CD4-positive, alpha-beta T cell (primary cell): ENCODE measurements at regions of chr10 and their contacts with region 1.

Region 1: DNA sequence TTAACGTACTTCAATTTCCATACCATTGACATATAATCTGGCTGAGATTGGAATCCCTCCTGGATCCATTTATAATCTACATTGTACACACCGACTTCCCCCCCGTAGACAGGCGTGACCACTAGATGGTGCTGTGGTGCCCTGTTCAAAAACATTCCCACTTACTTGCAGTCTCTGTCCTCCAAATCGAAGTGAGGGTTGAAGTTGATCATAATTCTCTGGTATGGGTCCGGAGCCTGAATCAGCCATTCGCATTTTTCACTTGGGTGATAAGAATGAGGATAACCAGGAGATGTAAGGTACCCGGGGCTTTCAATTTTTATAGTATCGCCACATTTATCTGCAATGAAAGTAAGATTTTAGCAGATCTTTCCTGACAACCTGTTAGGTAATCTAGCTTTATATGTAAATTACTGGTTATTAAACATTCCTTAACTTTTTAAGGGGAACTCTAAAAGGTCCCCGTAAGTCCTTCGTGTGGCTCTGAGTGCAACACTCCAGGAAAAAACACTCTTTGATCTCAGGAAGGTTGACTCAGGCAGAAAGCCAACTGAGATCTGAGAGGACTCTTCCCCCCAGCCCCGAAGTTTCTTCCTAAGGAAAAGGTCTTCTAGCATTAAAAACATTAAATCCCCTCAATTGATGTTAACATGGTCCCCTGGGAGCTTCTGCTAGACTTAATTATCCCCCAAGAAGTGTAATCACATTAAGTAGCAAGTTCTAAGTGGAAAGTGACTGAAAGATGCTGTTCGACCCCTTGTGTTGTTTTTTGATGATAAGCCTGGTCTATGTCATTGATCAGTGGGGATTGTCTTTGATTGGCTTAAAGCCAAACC is 3.7 kb downstream of the NRP1 start:
- DNase-seq: peak; percentile 55 to 88 (median 70)
- ATAC-seq: peak; percentile 65
- H3K4me3 ChIP-seq: no peak overlapping the region
- H3K4me3 Mint-ChIP-seq: no peak overlapping the region
- H3K27ac ChIP-seq: no peak overlapping the region
- H3K27ac Mint-ChIP-seq: no peak overlapping the region
- H3K4me1 ChIP-seq: peaks cover 26% of the 10 kb centered on the region
- H3K4me1 Mint-ChIP-seq: peaks cover 15% of the 10 kb centered on the region
- H3K27me3 ChIP-seq: peaks cover 34 to 44% of the 10 kb centered on the region in 2 experiments
- H3K27me3 Mint-ChIP-seq: peaks cover 73% of the 10 kb centered on the region
- CTCF ChIP-seq: peak; percentile 92

Region 2: GRCh38 chr10:32795598-32796183 is 535.1 kb before region 1 on chr10:
- CTCF ChIA-PET with region 1: no interaction called
- POLR2A ChIA-PET with region 1: no interaction called
- intact Hi-C with region 1: loop called in 1 of 2 experiments (anchors 5 kb)
- DNase-seq: peak in 4 of 14 experiments; percentile 23 to 66 (median 58)
- ATAC-seq: peak; percentile 46
- H3K4me3 ChIP-seq: no peak overlapping the region
- H3K4me3 Mint-ChIP-seq: no peak overlapping the region
- H3K27ac ChIP-seq: no peak overlapping the region
- H3K27ac Mint-ChIP-seq: no peak overlapping the region
- H3K4me1 ChIP-seq: no peaks in the 10 kb centered on the region
- H3K4me1 Mint-ChIP-seq: no peaks in the 10 kb centered on the region
- H3K27me3 ChIP-seq: no peaks in the 10 kb centered on the region
- H3K27me3 Mint-ChIP-seq: no peaks in the 10 kb centered on the region
- CTCF ChIP-seq: peak; percentile 83

Region 3: DNA sequence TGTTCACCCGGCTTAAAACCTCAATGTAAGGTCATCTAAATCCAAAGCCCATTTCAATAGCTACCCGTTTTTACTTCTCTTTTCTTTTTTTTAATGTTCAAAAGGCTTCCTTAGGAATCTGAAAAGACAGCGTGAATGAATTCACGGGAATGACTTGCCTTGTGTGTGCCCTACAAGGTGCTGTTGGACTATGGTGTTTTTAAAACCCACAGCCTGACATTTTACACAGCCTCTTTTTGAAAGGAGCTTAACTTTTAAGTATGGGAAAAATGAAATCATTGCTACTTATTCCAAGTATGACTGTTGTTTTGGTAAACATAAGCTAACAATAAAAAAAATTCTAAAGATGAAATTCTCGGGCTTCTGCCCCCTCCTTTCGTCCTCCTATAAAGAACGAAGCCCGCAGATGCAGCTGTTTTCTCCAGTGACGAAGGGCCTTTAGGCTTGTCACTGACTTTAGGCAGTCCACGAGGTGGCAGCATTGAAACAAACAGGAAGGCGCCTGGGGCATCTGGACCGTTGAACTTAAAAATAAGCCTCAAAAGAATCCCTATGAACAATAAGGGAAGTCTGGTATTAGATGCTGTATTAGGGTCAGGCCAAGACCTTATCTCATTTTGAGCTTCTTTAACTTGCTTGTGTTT is 137.6 kb before region 1 on chr10:
- CTCF ChIA-PET with region 1: interaction called, 7 read pairs
- POLR2A ChIA-PET with region 1: no interaction called
- intact Hi-C with region 1: loop called (anchors 5 kb)
- DNase-seq: peak; percentile 57 to 85 (median 72)
- ATAC-seq: peak; percentile 77
- H3K4me3 ChIP-seq: no peak overlapping the region
- H3K4me3 Mint-ChIP-seq: no peak overlapping the region
- H3K27ac ChIP-seq: no peak overlapping the region
- H3K27ac Mint-ChIP-seq: no peak overlapping the region
- H3K4me1 ChIP-seq: peaks cover 5% of the 10 kb centered on the region
- H3K4me1 Mint-ChIP-seq: peaks cover 7% of the 10 kb centered on the region
- H3K27me3 ChIP-seq: no peaks in the 10 kb centered on the region
- H3K27me3 Mint-ChIP-seq: peaks cover 8% of the 10 kb centered on the region
- CTCF ChIP-seq: peak; percentile 84

Region 4: GRCh38 chr10:33248638-33249037 is 82.1 kb before region 1 on chr10:
- CTCF ChIA-PET with region 1: no interaction called
- POLR2A ChIA-PET with region 1: no interaction called
- intact Hi-C with region 1: loop called in 1 of 2 experiments (anchors 5 kb)
- DNase-seq: peak in 6 of 14 experiments; percentile 10 to 87 (median 53)
- ATAC-seq: peak; percentile 96
- H3K4me3 ChIP-seq: peak overlapping the region; percentile 0
- H3K4me3 Mint-ChIP-seq: peak overlapping the region; percentile 79
- H3K27ac ChIP-seq: no peak overlapping the region
- H3K27ac Mint-ChIP-seq: peak overlapping the region; percentile 82
- H3K4me1 ChIP-seq: peaks cover 18% of the 10 kb centered on the region
- H3K4me1 Mint-ChIP-seq: peaks cover 69% of the 10 kb centered on the region
- H3K27me3 ChIP-seq: no peaks in the 10 kb centered on the region
- H3K27me3 Mint-ChIP-seq: no peaks in the 10 kb centered on the region
- CTCF ChIP-seq: no peak

Region 5: DNA sequence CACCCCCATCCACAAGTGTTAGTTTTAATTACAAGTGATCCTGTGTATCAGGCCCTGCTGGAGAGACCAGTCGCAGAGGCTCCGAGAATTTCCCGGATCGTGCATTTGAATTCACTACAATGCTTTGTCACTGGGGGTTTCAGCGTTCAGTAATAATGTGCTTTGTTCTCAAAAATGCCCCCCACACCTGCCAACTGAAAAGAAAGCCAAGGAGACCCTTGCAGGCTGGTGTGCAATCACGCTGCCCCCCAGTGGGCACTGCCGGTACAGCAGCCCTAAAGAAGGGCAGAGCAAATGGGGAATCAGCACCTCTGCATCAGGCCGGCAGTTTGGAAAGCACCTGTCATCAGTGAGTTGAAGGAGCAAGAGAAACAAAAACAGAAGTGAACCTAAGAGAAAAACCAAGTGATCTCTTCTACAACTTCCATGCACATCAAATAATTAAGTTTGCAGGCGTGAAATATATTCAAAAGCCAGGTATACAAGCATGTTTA is 1306.7 kb after region 1 on chr10:
- CTCF ChIA-PET with region 1: interaction called, 5 read pairs
- POLR2A ChIA-PET with region 1: no interaction called
- intact Hi-C with region 1: loop called (anchors 1 to 5 kb)
- DNase-seq: peak; percentile 36 to 74 (median 52)
- ATAC-seq: peak; percentile 77
- H3K4me3 ChIP-seq: no peak overlapping the region
- H3K4me3 Mint-ChIP-seq: no peak overlapping the region
- H3K27ac ChIP-seq: no peak overlapping the region
- H3K27ac Mint-ChIP-seq: no peak overlapping the region
- H3K4me1 ChIP-seq: peaks cover 6% of the 10 kb centered on the region
- H3K4me1 Mint-ChIP-seq: peaks cover 13% of the 10 kb centered on the region
- H3K27me3 ChIP-seq: no peaks in the 10 kb centered on the region
- H3K27me3 Mint-ChIP-seq: no peaks in the 10 kb centered on the region
- CTCF ChIP-seq: peak; percentile 94